Activated T-helper 1 cell treated with anti-CD3 and anti-CD28 coated beads, Interleukin-12 subunit alpha, Interleukin-12 subunit beta, Interleukin-2, Interleukin-4 antibody, amounts not matched to agents 30 ng/mL and 10 ng/mL and 1 ng/mL, durations not matched to agents 14 hours and 24 hours and 36 hours (primary cell): ENCODE measurements at regions of chr9 and their contacts with region 1.

Region 1: GRCh38 chr9:72526901-72527800 is 5.7 kb downstream of the TMC1 start:
- DNase-seq: peak; percentile 75
- H3K4me3 Mint-ChIP-seq: peak overlapping the region; percentile 69
- H3K27ac Mint-ChIP-seq: peak overlapping the region; percentile 95
- H3K4me1 Mint-ChIP-seq: peaks cover 66% of the 10 kb centered on the region
- H3K27me3 Mint-ChIP-seq: no peaks in the 10 kb centered on the region

Region 2: DNA sequence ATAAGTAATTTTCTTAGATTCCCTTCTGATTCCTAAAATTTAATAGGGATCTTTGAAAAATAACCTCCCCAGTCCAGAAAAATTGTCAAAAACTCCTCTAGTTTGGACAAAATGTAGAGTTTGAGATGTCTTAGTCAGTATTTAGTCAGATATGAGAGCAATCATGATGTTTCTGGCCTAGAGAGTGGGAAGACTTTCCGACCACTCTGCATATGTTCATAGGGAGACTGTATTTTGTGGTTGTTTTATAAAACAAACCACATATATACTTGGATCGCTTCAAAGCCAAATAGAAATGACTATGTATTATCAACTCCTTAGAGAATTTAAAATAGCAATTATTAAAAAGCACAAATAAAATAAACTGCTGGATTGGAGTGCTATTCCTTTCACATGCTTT is 177.9 kb before region 1 on chr9:
- intact Hi-C with region 1: loop called (anchors 1 kb)
- DNase-seq: no peak
- H3K4me3 Mint-ChIP-seq: no peak overlapping the region
- H3K27ac Mint-ChIP-seq: peak overlapping the region; percentile 26
- H3K4me1 Mint-ChIP-seq: peaks cover 21% of the 10 kb centered on the region
- H3K27me3 Mint-ChIP-seq: no peaks in the 10 kb centered on the region

Region 3: DNA sequence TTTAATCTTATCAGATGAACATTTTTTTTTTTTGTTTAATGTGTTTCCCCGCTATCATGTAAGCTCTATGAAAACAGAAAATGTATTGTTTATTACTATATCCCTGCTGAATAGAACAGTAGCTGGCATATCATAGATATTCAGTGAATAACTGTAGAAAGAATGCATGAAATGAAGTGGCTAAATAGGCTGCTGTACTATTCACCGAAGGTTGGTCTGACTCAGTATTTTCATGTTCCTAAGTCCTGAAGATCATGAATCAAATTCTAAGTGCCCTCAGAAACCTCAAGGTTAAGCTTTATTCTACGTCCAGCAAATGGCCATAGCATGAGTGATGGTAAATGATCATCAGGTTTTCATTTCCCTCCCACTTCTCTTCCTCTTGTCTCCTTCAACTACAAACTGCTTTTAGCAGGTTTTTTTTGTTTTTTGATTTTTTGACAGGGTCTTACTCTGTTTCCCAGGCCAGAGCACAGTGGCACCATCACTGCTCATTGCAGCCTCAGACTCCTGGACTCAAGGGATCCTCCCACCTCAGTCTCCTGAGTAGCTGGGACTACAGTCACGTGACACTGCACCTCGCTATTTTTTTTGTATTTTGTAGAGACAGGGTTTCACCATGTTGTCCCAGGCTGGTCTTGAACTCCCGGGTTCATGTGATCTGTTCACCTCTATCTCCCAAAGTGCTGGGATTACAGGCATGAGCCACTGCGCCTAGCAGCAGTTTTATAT is 143.0 kb before region 1 on chr9:
- intact Hi-C with region 1: loop called (anchors 1 kb)
- DNase-seq: no peak
- H3K4me3 Mint-ChIP-seq: no peak overlapping the region
- H3K27ac Mint-ChIP-seq: no peak overlapping the region
- H3K4me1 Mint-ChIP-seq: peaks cover 9% of the 10 kb centered on the region
- H3K27me3 Mint-ChIP-seq: peaks cover 4% of the 10 kb centered on the region

Region 4: DNA sequence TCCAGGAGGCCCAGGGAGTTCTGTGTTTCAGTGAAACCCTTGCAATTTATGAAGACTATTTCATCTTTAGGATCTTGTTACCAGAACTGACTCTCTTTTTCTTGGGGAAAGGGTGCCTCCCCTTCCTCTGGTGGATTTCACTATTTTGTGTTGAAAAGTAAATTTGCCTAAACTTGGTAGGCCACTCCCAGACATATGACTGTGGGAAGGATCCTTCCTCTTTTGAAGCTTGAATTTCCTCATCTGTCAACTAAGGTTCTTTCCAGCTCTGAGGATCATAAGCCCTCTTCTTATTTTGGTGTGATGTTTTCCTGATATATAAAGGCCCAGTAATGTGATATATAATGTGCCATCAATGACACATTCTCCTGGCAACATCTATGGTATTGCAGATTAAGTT is 103.0 kb before region 1 on chr9:
- intact Hi-C with region 1: no loop called
- DNase-seq: no peak
- H3K4me3 Mint-ChIP-seq: no peak overlapping the region
- H3K27ac Mint-ChIP-seq: no peak overlapping the region
- H3K4me1 Mint-ChIP-seq: no peaks in the 10 kb centered on the region
- H3K27me3 Mint-ChIP-seq: peaks cover 8% of the 10 kb centered on the region

Region 5: GRCh38 chr9:72443855-72444254 is 83.3 kb before region 1 on chr9:
- intact Hi-C with region 1: loop called (anchors 1 kb)
- DNase-seq: peak; percentile 8
- H3K4me3 Mint-ChIP-seq: peak overlapping the region; percentile 20
- H3K27ac Mint-ChIP-seq: peak overlapping the region; percentile 85
- H3K4me1 Mint-ChIP-seq: peaks cover 43% of the 10 kb centered on the region
- H3K27me3 Mint-ChIP-seq: no peaks in the 10 kb centered on the region

Region 6: GRCh38 chr9:72464857-72465592 is 62.1 kb before region 1 on chr9:
- intact Hi-C with region 1: no loop called
- DNase-seq: no peak
- H3K4me3 Mint-ChIP-seq: no peak overlapping the region
- H3K27ac Mint-ChIP-seq: no peak overlapping the region
- H3K4me1 Mint-ChIP-seq: peaks cover 19% of the 10 kb centered on the region
- H3K27me3 Mint-ChIP-seq: peaks cover 2% of the 10 kb centered on the region

Region 7: DNA sequence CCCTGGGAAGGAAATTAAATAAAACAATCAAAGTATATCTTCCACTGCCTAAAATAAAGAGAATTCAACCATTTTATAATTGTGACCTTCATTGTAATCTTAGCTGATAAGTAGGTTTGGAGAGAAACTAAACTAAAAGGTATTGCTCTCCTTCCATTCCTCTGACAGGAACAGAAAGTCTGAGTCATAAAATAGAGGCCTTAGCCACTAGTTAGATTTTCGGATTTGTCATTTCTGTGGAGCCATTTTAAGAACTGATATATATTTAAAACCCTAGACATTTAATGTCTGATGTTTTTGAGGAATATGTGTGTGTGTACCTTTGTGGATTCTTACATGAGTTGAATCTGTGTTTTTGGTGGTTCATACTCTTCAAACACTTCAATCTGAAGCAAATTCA is 17.5 kb before region 1 on chr9:
- intact Hi-C with region 1: loop called (anchors 1 kb)
- DNase-seq: no peak
- H3K4me3 Mint-ChIP-seq: peak overlapping the region; percentile 38
- H3K27ac Mint-ChIP-seq: peak overlapping the region; percentile 79
- H3K4me1 Mint-ChIP-seq: peaks cover 20% of the 10 kb centered on the region
- H3K27me3 Mint-ChIP-seq: no peaks in the 10 kb centered on the region

Region 8: GRCh38 chr9:72540348-72540873 is 13.3 kb after region 1 on chr9:
- intact Hi-C with region 1: loop called (anchors 1 kb)
- DNase-seq: no peak
- H3K4me3 Mint-ChIP-seq: no peak overlapping the region
- H3K27ac Mint-ChIP-seq: no peak overlapping the region
- H3K4me1 Mint-ChIP-seq: peaks cover 36% of the 10 kb centered on the region
- H3K27me3 Mint-ChIP-seq: no peaks in the 10 kb centered on the region

Region 9: DNA sequence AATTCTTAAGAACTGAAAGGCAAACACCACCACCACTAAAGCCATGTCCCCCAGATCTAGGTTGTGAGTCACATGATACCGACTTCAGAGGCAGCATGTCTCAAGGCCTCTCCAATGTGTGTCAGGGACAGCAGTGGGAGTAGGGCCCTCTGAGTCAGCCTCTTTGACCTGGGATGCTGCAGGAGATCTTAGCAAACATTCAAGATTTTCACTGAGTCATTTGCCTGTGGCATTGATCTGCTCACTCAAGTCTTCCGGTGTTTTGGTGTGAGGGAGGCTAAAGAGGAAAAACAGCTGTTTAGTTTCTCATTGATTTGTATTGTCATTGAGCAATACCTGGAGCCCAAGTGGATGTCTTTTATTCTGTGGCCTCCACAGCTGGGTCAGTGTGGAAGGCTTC is 30.4 kb after region 1 on chr9:
- intact Hi-C with region 1: loop called (anchors 1 kb)
- DNase-seq: peak; percentile 21
- H3K4me3 Mint-ChIP-seq: peak overlapping the region; percentile 3
- H3K27ac Mint-ChIP-seq: peak overlapping the region; percentile 90
- H3K4me1 Mint-ChIP-seq: peaks cover 21% of the 10 kb centered on the region
- H3K27me3 Mint-ChIP-seq: no peaks in the 10 kb centered on the region

Region 10: DNA sequence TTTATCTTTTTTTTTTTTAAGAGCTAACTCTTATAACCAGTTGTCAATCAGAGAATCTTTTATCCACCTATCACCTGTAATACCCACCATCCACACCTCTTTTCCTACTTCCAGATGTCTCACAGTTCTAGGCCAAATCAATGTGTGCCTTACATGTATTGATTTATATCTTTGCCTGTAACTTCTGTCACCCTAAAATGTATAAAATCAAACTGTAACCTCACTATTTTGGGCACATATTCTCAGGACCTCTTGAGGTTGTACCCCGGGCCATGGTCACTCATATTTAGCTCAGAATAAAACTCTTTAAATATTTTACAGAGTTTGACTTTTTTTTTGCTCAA is 1565.3 kb after region 1 on chr9:
- intact Hi-C with region 1: no loop called
- DNase-seq: no peak
- H3K4me3 Mint-ChIP-seq: no peak overlapping the region
- H3K27ac Mint-ChIP-seq: no peak overlapping the region
- H3K4me1 Mint-ChIP-seq: no peaks in the 10 kb centered on the region
- H3K27me3 Mint-ChIP-seq: no peaks in the 10 kb centered on the region